Activated CD8-positive, alpha-beta T cell treated with anti-CD3 and anti-CD28 coated beads for 36 hours (primary cell): ENCODE measurements at regions of chr6 and their contacts with region 1.

Region 1: GRCh38 chr6:2940010-2940850 is 31.1 kb downstream of the SERPINB6 start:
- DNase-seq: peak; percentile 94
- ATAC-seq: peak; percentile 88
- H3K4me3 Mint-ChIP-seq: peak overlapping the region; percentile 54
- H3K27ac Mint-ChIP-seq: peak overlapping the region; percentile 96
- H3K4me1 Mint-ChIP-seq: peaks cover 66% of the 10 kb centered on the region
- H3K27me3 Mint-ChIP-seq: no peaks in the 10 kb centered on the region
- CTCF ChIP-seq: no peak

Region 2: GRCh38 chr6:2841264-2842138 is 98.7 kb before region 1 on chr6 and contains the start of gene SERPINB1:
- CTCF ChIA-PET with region 1: interaction called, 180 read pairs
- POLR2A ChIA-PET with region 1: interaction called, 9 read pairs
- intact Hi-C with region 1: loop called (anchors 2 kb)
- DNase-seq: peak; percentile 95
- ATAC-seq: peak; percentile 90
- H3K4me3 Mint-ChIP-seq: peak within 1 kb of the TSS; percentile 85
- H3K27ac Mint-ChIP-seq: peak within 1 kb of the TSS; percentile 92
- H3K4me1 Mint-ChIP-seq: peaks cover 65% of the 10 kb centered on the region
- H3K27me3 Mint-ChIP-seq: no peaks in the 10 kb centered on the region
- CTCF ChIP-seq: no peak
- total RNA-seq, gene SERPINB1: 55.8 to 60.0 TPM

Region 3: GRCh38 chr6:2900821-2901644 is 39.2 kb before region 1 on chr6:
- CTCF ChIA-PET with region 1: interaction called, 10 read pairs
- POLR2A ChIA-PET with region 1: interaction called, 7 read pairs
- intact Hi-C with region 1: loop called (anchors 5 kb)
- DNase-seq: peak; percentile 22
- ATAC-seq: peak; percentile 7
- H3K4me3 Mint-ChIP-seq: peak overlapping the region; percentile 98
- H3K27ac Mint-ChIP-seq: peak overlapping the region; percentile 80
- H3K4me1 Mint-ChIP-seq: peaks cover 47% of the 10 kb centered on the region
- H3K27me3 Mint-ChIP-seq: no peaks in the 10 kb centered on the region
- CTCF ChIP-seq: no peak